Panc1 (cell line): ENCODE measurements at regions of chr12 and their contacts with region 1.

Region 1: GRCh38 chr12:122965851-122966722 is at the start of gene ABCB9:
- DNase-seq: no peak
- ATAC-seq: peak; percentile 91
- H3K4me3 ChIP-seq: peak within 1 kb of the TSS; percentile 73 to 83
- H3K27ac ChIP-seq: peak within 1 kb of the TSS; percentile 73
- H3K4me1 ChIP-seq: peaks cover 39% of the 10 kb centered on the region
- H3K27me3 ChIP-seq: no peaks in the 10 kb centered on the region
- CTCF ChIP-seq: no peak
- total RNA-seq, gene ABCB9: 32.7 TPM

Region 2: GRCh38 chr12:122293081-122293480 is 673.0 kb before region 1 on chr12:
- CTCF ChIA-PET with region 1: no interaction called
- POLR2A ChIA-PET with region 1: no interaction called
- in situ Hi-C with region 1: no loop called
- intact Hi-C with region 1: no loop called
- DNase-seq: no peak
- ATAC-seq: no peak
- H3K4me3 ChIP-seq: no peak overlapping the region
- H3K27ac ChIP-seq: no peak overlapping the region
- H3K4me1 ChIP-seq: no peaks in the 10 kb centered on the region
- H3K27me3 ChIP-seq: no peaks in the 10 kb centered on the region
- CTCF ChIP-seq: no peak

Region 3: GRCh38 chr12:122825773-122826724 is 140.0 kb before region 1 on chr12:
- CTCF ChIA-PET with region 1: interaction called, 12 read pairs
- POLR2A ChIA-PET with region 1: interaction called, 8 read pairs
- in situ Hi-C with region 1: no loop called
- intact Hi-C with region 1: no loop called
- DNase-seq: no peak
- ATAC-seq: peak; percentile 64
- H3K4me3 ChIP-seq: peak overlapping the region; percentile 25 to 38
- H3K27ac ChIP-seq: no peak overlapping the region
- H3K4me1 ChIP-seq: peaks cover 3% of the 10 kb centered on the region; the same call in 1 of the 2 replicates
- H3K27me3 ChIP-seq: no peaks in the 10 kb centered on the region
- CTCF ChIP-seq: no peak

Region 4: DNA sequence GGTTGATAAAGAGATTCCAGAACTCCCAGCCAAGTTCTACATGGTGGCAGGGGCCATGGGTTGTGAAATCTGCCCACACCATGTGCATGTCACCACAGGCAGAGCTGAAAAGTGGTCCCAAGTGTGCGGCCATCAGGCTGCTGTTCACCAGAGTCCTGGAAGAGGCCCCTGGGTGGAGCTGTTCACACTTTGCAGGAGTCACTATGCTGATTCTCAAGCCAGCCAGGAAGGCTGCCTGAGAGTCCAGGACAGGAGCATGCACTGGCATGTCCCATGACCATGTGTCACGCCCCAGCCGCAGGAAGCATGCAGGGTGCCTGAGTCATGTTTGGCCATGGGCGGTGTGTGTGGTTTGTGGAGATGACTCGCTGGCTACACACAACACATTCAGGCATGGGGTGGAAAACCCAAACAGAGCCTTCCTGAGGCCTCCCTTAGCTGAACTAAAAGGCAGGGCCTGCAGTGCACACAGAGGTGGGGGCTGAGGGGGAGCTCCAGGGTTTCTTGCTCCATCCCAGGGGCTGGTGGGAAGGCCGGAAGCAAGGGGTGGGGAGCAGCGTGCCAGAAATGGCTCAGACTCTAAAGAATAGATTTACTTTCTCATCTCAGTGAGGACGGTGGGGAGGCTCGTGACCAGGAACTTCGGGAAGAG is 19.3 kb before region 1 on chr12:
- CTCF ChIA-PET with region 1: interaction called, 13 read pairs
- POLR2A ChIA-PET with region 1: interaction called, 6 read pairs
- in situ Hi-C with region 1: no loop called
- intact Hi-C with region 1: no loop called
- DNase-seq: peak; percentile 91
- ATAC-seq: peak; percentile 72
- H3K4me3 ChIP-seq: no peak overlapping the region
- H3K27ac ChIP-seq: peak overlapping the region; percentile 85
- H3K4me1 ChIP-seq: peaks cover 68% of the 10 kb centered on the region
- H3K27me3 ChIP-seq: no peaks in the 10 kb centered on the region
- CTCF ChIP-seq: no peak